CD4-positive, alpha-beta T cell (primary cell): ENCODE measurements at regions of chr14 and their contacts with region 1.

Region 1: GRCh38 chr14:37985826-37986470 is 221.8 kb upstream of the SSTR1 start:
- DNase-seq: peak; percentile 13 to 82 (median 38)
- ATAC-seq: peak; percentile 52
- H3K4me3 ChIP-seq: no peak overlapping the region
- H3K4me3 Mint-ChIP-seq: no peak overlapping the region
- H3K27ac ChIP-seq: no peak overlapping the region
- H3K27ac Mint-ChIP-seq: no peak overlapping the region
- H3K4me1 ChIP-seq: no peaks in the 10 kb centered on the region
- H3K4me1 Mint-ChIP-seq: peaks cover 5% of the 10 kb centered on the region
- H3K27me3 ChIP-seq: no peaks in the 10 kb centered on the region
- H3K27me3 Mint-ChIP-seq: no peaks in the 10 kb centered on the region
- CTCF ChIP-seq: peak; percentile 79

Region 2: DNA sequence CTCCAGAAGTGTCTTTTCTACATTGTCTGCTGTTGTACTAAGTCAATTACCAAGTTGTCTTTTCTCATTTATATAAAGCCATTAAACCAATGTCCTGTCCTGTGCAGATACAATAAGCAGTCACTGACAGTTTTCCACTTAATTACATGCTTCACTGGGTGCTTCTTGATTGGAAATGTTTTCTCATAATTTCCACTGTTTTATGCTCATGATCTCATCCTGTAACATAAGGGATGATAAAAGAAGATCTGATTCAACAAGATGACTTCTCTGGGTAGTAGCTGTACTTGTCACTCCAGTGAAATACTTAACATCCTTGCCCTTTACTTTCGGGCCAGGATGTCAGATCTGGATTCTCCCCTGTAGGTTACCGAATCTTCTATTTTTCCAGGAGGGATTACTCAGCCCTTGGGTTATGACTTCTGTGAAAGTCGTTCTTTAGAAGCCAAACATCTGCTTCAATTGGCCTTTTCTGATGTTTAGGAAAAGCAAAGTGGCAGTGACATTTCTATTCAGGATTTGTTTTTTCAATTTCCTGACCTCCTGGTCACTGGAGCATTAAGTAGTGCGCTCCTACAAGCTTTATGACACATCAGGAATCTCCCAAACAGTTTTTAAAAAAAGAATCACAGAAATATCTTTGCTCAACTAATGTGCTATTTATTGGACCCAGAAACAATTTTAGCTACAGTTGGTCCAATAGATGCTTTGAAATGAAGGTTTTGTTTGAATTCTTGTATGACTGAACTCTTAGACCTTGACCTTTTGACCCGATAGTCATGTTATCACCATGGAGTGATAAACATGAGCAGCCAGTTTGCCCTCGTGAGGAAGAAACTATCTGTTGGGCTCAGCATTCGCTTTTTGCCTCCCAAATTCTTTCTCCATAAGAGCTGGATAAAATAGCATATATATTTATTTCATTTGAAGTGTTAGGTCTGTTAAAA is 12.7 kb before region 1 on chr14:
- CTCF ChIA-PET with region 1: no interaction called
- POLR2A ChIA-PET with region 1: no interaction called
- intact Hi-C with region 1: no loop called
- DNase-seq: no peak
- ATAC-seq: no peak
- H3K4me3 ChIP-seq: no peak overlapping the region
- H3K4me3 Mint-ChIP-seq: no peak overlapping the region
- H3K27ac ChIP-seq: no peak overlapping the region
- H3K27ac Mint-ChIP-seq: no peak overlapping the region
- H3K4me1 ChIP-seq: peaks cover 4% of the 10 kb centered on the region
- H3K4me1 Mint-ChIP-seq: no peaks in the 10 kb centered on the region
- H3K27me3 ChIP-seq: no peaks in the 10 kb centered on the region
- H3K27me3 Mint-ChIP-seq: peaks cover 16% of the 10 kb centered on the region
- CTCF ChIP-seq: no peak

Region 3: GRCh38 chr14:38016497-38016896 is 30.5 kb after region 1 on chr14:
- CTCF ChIA-PET with region 1: interaction called, 4 read pairs
- POLR2A ChIA-PET with region 1: no interaction called
- intact Hi-C with region 1: loop called in 1 of 2 experiments (anchors 1 kb)
- DNase-seq: no peak
- ATAC-seq: no peak
- H3K4me3 ChIP-seq: no peak overlapping the region
- H3K4me3 Mint-ChIP-seq: no peak overlapping the region
- H3K27ac ChIP-seq: no peak overlapping the region
- H3K27ac Mint-ChIP-seq: no peak overlapping the region
- H3K4me1 ChIP-seq: no peaks in the 10 kb centered on the region
- H3K4me1 Mint-ChIP-seq: no peaks in the 10 kb centered on the region
- H3K27me3 ChIP-seq: no peaks in the 10 kb centered on the region
- H3K27me3 Mint-ChIP-seq: no peaks in the 10 kb centered on the region
- CTCF ChIP-seq: no peak

Region 4: DNA sequence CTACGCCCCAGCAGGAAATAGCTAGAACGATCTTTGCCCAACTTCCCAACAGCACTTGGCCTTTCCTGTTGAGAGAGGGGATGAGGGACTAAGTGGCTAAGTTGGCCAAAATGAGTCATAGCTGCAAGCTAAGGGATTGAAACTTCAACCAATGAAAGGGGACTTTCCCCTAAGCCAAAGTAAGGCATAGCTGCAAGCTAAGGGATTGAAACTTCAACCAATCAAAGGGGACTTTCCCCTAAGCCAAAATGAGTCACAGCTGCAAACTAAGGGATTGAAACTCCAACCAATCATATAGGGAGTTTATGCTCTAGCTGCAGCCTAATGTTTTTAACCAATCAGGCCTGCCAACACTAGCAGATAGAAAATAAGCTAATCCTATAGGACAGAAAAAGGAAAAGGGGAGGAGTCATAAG is 121.3 kb after region 1 on chr14:
- CTCF ChIA-PET with region 1: no interaction called
- POLR2A ChIA-PET with region 1: no interaction called
- intact Hi-C with region 1: no loop called
- DNase-seq: peak in 2 of 14 experiments; percentile 10 to 32
- ATAC-seq: no peak
- H3K4me3 ChIP-seq: no peak overlapping the region
- H3K4me3 Mint-ChIP-seq: no peak overlapping the region
- H3K27ac ChIP-seq: no peak overlapping the region
- H3K27ac Mint-ChIP-seq: no peak overlapping the region
- H3K4me1 ChIP-seq: peaks cover 5% of the 10 kb centered on the region
- H3K4me1 Mint-ChIP-seq: peaks cover 19% of the 10 kb centered on the region
- H3K27me3 ChIP-seq: no peaks in the 10 kb centered on the region
- H3K27me3 Mint-ChIP-seq: no peaks in the 10 kb centered on the region
- CTCF ChIP-seq: no peak

Region 5: GRCh38 chr14:38150072-38150471 is 164.1 kb after region 1 on chr14:
- CTCF ChIA-PET with region 1: no interaction called
- POLR2A ChIA-PET with region 1: no interaction called
- intact Hi-C with region 1: loop called (anchors 5 kb)
- DNase-seq: peak in 2 of 14 experiments; percentile 20 to 28
- ATAC-seq: no peak
- H3K4me3 ChIP-seq: no peak overlapping the region
- H3K4me3 Mint-ChIP-seq: no peak overlapping the region
- H3K27ac ChIP-seq: no peak overlapping the region
- H3K27ac Mint-ChIP-seq: no peak overlapping the region
- H3K4me1 ChIP-seq: no peaks in the 10 kb centered on the region
- H3K4me1 Mint-ChIP-seq: no peaks in the 10 kb centered on the region
- H3K27me3 ChIP-seq: no peaks in the 10 kb centered on the region
- H3K27me3 Mint-ChIP-seq: no peaks in the 10 kb centered on the region
- CTCF ChIP-seq: no peak

Region 6: GRCh38 chr14:38197001-38197783 is 211.2 kb after region 1 on chr14:
- CTCF ChIA-PET with region 1: no interaction called
- POLR2A ChIA-PET with region 1: no interaction called
- intact Hi-C with region 1: loop called (anchors 1 to 2 kb)
- DNase-seq: peak in 3 of 14 experiments; percentile 28 to 44 (median 42)
- ATAC-seq: no peak
- H3K4me3 ChIP-seq: no peak overlapping the region
- H3K4me3 Mint-ChIP-seq: no peak overlapping the region
- H3K27ac ChIP-seq: no peak overlapping the region
- H3K27ac Mint-ChIP-seq: no peak overlapping the region
- H3K4me1 ChIP-seq: peaks cover 3% of the 10 kb centered on the region
- H3K4me1 Mint-ChIP-seq: peaks cover 5% of the 10 kb centered on the region
- H3K27me3 ChIP-seq: no peaks in the 10 kb centered on the region
- H3K27me3 Mint-ChIP-seq: no peaks in the 10 kb centered on the region
- CTCF ChIP-seq: peak; percentile 58

Region 7: GRCh38 chr14:38867561-38868150 is 881.7 kb after region 1 on chr14:
- CTCF ChIA-PET with region 1: no interaction called
- POLR2A ChIA-PET with region 1: no interaction called
- intact Hi-C with region 1: loop called in 1 of 2 experiments (anchors 10 kb)
- DNase-seq: peak in 13 of 14 experiments; percentile 9 to 77 (median 37)
- ATAC-seq: no peak
- H3K4me3 ChIP-seq: no peak overlapping the region
- H3K4me3 Mint-ChIP-seq: no peak overlapping the region
- H3K27ac ChIP-seq: no peak overlapping the region
- H3K27ac Mint-ChIP-seq: no peak overlapping the region
- H3K4me1 ChIP-seq: no peaks in the 10 kb centered on the region
- H3K4me1 Mint-ChIP-seq: no peaks in the 10 kb centered on the region
- H3K27me3 ChIP-seq: no peaks in the 10 kb centered on the region
- H3K27me3 Mint-ChIP-seq: peaks cover 12% of the 10 kb centered on the region
- CTCF ChIP-seq: peak; percentile 75